B cell (primary cell): ENCODE measurements at regions of chr7 and their contacts with region 1.

Region 1: DNA sequence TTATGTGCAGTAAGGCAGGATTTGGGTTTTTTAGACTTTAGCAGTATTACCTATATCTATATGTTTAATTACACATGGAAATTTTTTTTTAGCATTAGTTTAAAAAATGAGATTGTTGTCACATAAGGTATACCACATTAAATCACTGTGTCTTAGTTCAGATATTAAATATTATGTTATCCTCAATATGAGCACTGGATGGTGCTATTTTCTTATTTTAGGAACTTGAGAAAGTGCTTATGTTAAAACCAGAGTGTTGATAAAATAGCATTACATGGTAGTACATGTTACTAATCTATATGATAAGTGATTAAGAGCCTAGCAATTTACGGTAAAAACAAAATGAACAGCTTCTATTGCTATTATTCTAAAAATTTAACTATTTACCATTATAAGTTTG is 28.8 kb downstream of the MIOS start:
- DNase-seq: peak; percentile 58
- ATAC-seq: peak; percentile 33
- H3K4me3 ChIP-seq: no peak overlapping the region
- H3K4me3 Mint-ChIP-seq: no peak overlapping the region
- H3K27ac ChIP-seq: no peak overlapping the region
- H3K27ac Mint-ChIP-seq: no peak overlapping the region
- H3K4me1 ChIP-seq: no peaks in the 10 kb centered on the region
- H3K4me1 Mint-ChIP-seq: no peaks in the 10 kb centered on the region
- H3K27me3 ChIP-seq: no peaks in the 10 kb centered on the region
- H3K27me3 Mint-ChIP-seq: no peaks in the 10 kb centered on the region
- CTCF ChIP-seq: peak; percentile 75

Region 2: DNA sequence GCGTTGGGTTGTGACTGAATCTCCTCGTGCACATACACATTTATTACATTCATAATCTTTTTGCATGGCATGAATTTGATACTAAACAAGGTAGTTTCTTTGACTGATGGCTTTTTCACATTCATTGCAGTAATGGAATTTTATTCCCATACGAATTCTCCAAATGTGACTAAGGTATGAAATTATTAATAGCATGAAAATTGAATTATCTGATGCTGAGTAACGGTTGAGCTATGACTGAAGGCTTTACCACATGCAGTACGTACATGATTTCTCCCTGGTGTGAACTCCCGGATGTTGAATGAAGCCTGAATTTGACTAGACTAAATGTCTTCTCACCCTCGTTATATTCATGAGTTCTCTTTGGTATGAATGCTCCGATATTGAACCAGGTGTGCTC is 517.5 kb before region 1 on chr7:
- CTCF ChIA-PET with region 1: no interaction called
- POLR2A ChIA-PET with region 1: no interaction called
- intact Hi-C with region 1: no loop called
- DNase-seq: no peak
- ATAC-seq: no peak
- H3K4me3 ChIP-seq: no peak overlapping the region
- H3K4me3 Mint-ChIP-seq: no peak overlapping the region
- H3K27ac ChIP-seq: no peak overlapping the region
- H3K27ac Mint-ChIP-seq: no peak overlapping the region
- H3K4me1 ChIP-seq: no peaks in the 10 kb centered on the region
- H3K4me1 Mint-ChIP-seq: no peaks in the 10 kb centered on the region
- H3K27me3 ChIP-seq: peaks cover 0 to 4% (median 0%) of the 10 kb centered on the region in 4 experiments
- H3K27me3 Mint-ChIP-seq: peaks cover 11% of the 10 kb centered on the region
- CTCF ChIP-seq: no peak

Region 3: DNA sequence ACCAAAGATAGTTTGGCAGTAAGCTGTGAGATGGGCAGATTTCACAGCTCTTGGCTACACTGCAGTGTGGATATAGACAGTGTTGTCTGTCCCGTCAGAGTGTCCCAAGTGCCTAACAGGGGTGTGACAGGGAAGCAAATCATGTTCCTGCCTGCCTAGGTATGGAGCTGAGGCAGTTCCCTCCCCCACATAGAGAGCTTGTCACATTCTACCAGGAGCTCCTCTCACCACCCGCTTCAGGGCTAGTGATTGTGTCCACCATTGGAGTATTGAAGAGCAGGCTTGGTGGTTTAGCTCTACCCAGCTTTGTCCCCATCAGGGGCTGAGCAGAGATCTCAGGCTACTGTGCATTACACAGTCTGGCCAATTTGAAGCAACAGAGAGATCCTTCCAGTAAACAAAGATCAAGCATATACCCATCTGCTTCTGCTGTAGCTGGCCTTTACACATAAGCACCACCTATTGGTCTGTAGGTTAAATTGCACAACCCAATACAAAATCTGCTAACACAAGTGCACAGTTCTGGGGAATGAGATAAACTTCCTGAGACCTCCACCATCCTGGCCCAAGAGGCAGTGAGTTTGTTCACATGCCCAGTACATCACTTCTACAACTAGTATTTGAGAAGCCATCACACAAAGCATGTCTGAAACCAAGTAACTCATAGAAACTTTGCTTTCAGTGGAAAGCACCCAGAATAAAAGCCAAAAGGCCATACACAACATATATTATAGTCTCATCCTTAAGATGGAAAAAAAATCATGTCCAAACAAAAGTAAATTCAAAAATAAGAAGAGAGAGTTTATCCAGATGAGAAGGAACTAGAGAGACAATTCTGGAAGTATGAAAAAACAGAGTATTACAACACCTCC is 440.4 kb after region 1 on chr7:
- CTCF ChIA-PET with region 1: interaction called, 12 read pairs
- POLR2A ChIA-PET with region 1: no interaction called
- intact Hi-C with region 1: no loop called
- DNase-seq: peak; percentile 54
- ATAC-seq: peak; percentile 78
- H3K4me3 ChIP-seq: no peak overlapping the region
- H3K4me3 Mint-ChIP-seq: no peak overlapping the region
- H3K27ac ChIP-seq: peak overlapping the region in 1 of 2 donors; percentile 20
- H3K27ac Mint-ChIP-seq: peak overlapping the region; percentile 77
- H3K4me1 ChIP-seq: peaks cover 3 to 5% of the 10 kb centered on the region in 2 donors
- H3K4me1 Mint-ChIP-seq: peaks cover 14% of the 10 kb centered on the region
- H3K27me3 ChIP-seq: no peaks in the 10 kb centered on the region
- H3K27me3 Mint-ChIP-seq: no peaks in the 10 kb centered on the region
- CTCF ChIP-seq: peak; percentile 75

Region 4: GRCh38 chr7:8295638-8296361 is 700.3 kb after region 1 on chr7:
- CTCF ChIA-PET with region 1: interaction called, 12 read pairs
- POLR2A ChIA-PET with region 1: no interaction called
- intact Hi-C with region 1: no loop called
- DNase-seq: peak; percentile 70
- ATAC-seq: peak; percentile 67
- H3K4me3 ChIP-seq: no peak overlapping the region
- H3K4me3 Mint-ChIP-seq: no peak overlapping the region
- H3K27ac ChIP-seq: no peak overlapping the region
- H3K27ac Mint-ChIP-seq: no peak overlapping the region
- H3K4me1 ChIP-seq: no peaks in the 10 kb centered on the region
- H3K4me1 Mint-ChIP-seq: peaks cover 2% of the 10 kb centered on the region
- H3K27me3 ChIP-seq: peaks cover 0 to 5% (median 0%) of the 10 kb centered on the region in 4 experiments
- H3K27me3 Mint-ChIP-seq: peaks cover 17% of the 10 kb centered on the region
- CTCF ChIP-seq: peak; percentile 84